ENCODE measurements at regions of chr19 and their contacts with region 1.

Region 1: GRCh38 chr19:10510301-10510802 is 6.9 kb downstream of the S1PR5 start:
- DNase-seq: peak; percentile 40 to 55 (median 47)
- H3K4me3 ChIP-seq: no peak overlapping the region
- H3K27ac ChIP-seq: no peak overlapping the region
- H3K4me1 ChIP-seq: peaks cover 0 to 21% (median 17%) of the 10 kb centered on the region in 4 experiments
- H3K27me3 ChIP-seq: peaks cover 0 to 42% (median 14%) of the 10 kb centered on the region in 5 experiments

Region 2: GRCh38 chr19:10523135-10523636 is 12.8 kb after region 1 on chr19:
- CTCF ChIA-PET with region 1: interaction called, 14 read pairs
- POLR2A ChIA-PET with region 1: interaction called, 6 read pairs
- DNase-seq: no peak
- H3K4me3 ChIP-seq: no peak overlapping the region
- H3K27ac ChIP-seq: no peak overlapping the region
- H3K4me1 ChIP-seq: peaks cover 0 to 10% (median 7%) of the 10 kb centered on the region in 4 experiments
- H3K27me3 ChIP-seq: peaks cover 0 to 23% (median 17%) of the 10 kb centered on the region in 5 experiments

Region 3: GRCh38 chr19:10533646-10534386 is 23.5 kb after region 1 on chr19:
- CTCF ChIA-PET with region 1: interaction called, 12 read pairs
- POLR2A ChIA-PET with region 1: no interaction called
- DNase-seq: peak in 2 of 3 donors; percentile 38 to 55
- H3K4me3 ChIP-seq: no peak overlapping the region
- H3K27ac ChIP-seq: no peak overlapping the region
- H3K4me1 ChIP-seq: peaks cover 0 to 8% (median 0%) of the 10 kb centered on the region in 4 experiments
- H3K27me3 ChIP-seq: peaks cover 0 to 2% (median 0%) of the 10 kb centered on the region in 5 experiments

Region 4: GRCh38 chr19:10551698-10552301 is 41.4 kb after region 1 on chr19:
- CTCF ChIA-PET with region 1: interaction called, 37 read pairs
- POLR2A ChIA-PET with region 1: no interaction called
- DNase-seq: peak; percentile 61 to 76 (median 74)
- H3K4me3 ChIP-seq: peak overlapping the region in 1 of 7 experiments; percentile 42
- H3K27ac ChIP-seq: no peak overlapping the region
- H3K4me1 ChIP-seq: peaks cover 3 to 61% (median 58%) of the 10 kb centered on the region in 4 experiments
- H3K27me3 ChIP-seq: no peaks in the 10 kb centered on the region

Measured in common myeloid progenitor, CD34-positive (primary cell).